Breast epithelium (tissue), 4 donors: ENCODE measurements at regions of chr4 and their contacts with region 1.

Region 1: DNA sequence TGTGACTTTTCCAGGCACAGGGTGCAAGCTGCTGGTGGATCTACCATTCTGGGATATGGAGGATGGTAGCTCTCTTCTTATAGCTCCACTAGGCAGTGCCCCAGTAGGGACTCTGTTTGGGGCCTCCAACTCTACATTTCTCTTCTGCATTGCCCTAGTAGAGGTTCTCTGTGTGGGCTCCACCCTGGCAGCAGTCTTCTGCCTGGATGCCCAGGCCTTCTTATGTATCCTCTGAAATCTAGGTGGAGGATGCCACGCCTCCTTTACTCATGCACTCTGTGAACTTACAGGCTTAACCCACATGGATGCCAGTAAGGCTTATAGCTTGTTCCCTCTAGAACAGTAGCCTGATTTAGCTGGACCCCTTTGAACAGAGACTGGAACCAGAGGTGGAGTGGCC is 20.9 kb upstream of the EREG start:
- DNase-seq: no peak
- H3K4me3 ChIP-seq: no peak overlapping the region
- H3K27ac ChIP-seq: no peak overlapping the region
- H3K4me1 ChIP-seq: no peaks in the 10 kb centered on the region
- H3K27me3 ChIP-seq: no peaks in the 10 kb centered on the region
- CTCF ChIP-seq: no peak
- POLR2A ChIP-seq: no peak

Region 2: GRCh38 chr4:74397748-74398426 is 53.9 kb after region 1 on chr4:
- intact Hi-C with region 1: loop called (anchors 2 kb)
- DNase-seq: no peak
- H3K4me3 ChIP-seq: peak overlapping the region; percentile 31 to 51 (median 35)
- H3K27ac ChIP-seq: peak overlapping the region in 1 of 2 donors; percentile 17
- H3K4me1 ChIP-seq: no peaks in the 10 kb centered on the region
- H3K27me3 ChIP-seq: no peaks in the 10 kb centered on the region
- CTCF ChIP-seq: no peak
- POLR2A ChIP-seq: no peak